ENCODE measurements at regions of chr5 and their contacts with region 1.

Region 1: GRCh38 chr5:173396311-173396993 is 68.2 kb upstream of the STC2 start:
- DNase-seq: peak; percentile 21 to 76
- H3K4me3 ChIP-seq: no peak overlapping the region
- H3K27ac ChIP-seq: no peak overlapping the region
- H3K4me1 ChIP-seq: no peaks in the 10 kb centered on the region
- H3K27me3 ChIP-seq: peaks cover 0 to 1% (median 0%) of the 10 kb centered on the region in 4 experiments; a peak in 1 of 7 replicates
- CTCF ChIP-seq: peak; percentile 67 to 73 (median 71)
- EP300 ChIP-seq: no peak
- POLR2A ChIP-seq: no peak
- RAD21 ChIP-seq: peak; percentile 61 to 73

Region 2: GRCh38 chr5:173581408-173582215 is 185.2 kb after region 1 on chr5:
- CTCF ChIA-PET with region 1: interaction called, 33 read pairs
- POLR2A ChIA-PET with region 1: no interaction called
- DNase-seq: peak; percentile 49 to 96
- H3K4me3 ChIP-seq: no peak overlapping the region
- H3K27ac ChIP-seq: no peak overlapping the region
- H3K4me1 ChIP-seq: no peaks in the 10 kb centered on the region
- H3K27me3 ChIP-seq: no peaks in the 10 kb centered on the region
- CTCF ChIP-seq: peak; percentile 90 to 94 (median 94)
- EP300 ChIP-seq: no peak
- POLR2A ChIP-seq: no peak
- RAD21 ChIP-seq: peak; percentile 80 to 86